ENCODE measurements at regions of chr1 and their contacts with region 1.

Region 1: GRCh38 chr1:202589190-202590030 is 120.8 kb downstream of the SYT2 start:
- DNase-seq: peak; percentile 90 to 95
- ATAC-seq: peak; percentile 95 to 96
- H3K4me3 ChIP-seq: no peak overlapping the region
- H3K27ac ChIP-seq: peak overlapping the region; percentile 77 to 90 (median 82)
- H3K4me1 ChIP-seq: peaks cover 70 to 71% of the 10 kb centered on the region in 2 donors
- H3K27me3 ChIP-seq: no peaks in the 10 kb centered on the region
- CTCF ChIP-seq: no peak
- POLR2A ChIP-seq: no peak

Region 2: DNA sequence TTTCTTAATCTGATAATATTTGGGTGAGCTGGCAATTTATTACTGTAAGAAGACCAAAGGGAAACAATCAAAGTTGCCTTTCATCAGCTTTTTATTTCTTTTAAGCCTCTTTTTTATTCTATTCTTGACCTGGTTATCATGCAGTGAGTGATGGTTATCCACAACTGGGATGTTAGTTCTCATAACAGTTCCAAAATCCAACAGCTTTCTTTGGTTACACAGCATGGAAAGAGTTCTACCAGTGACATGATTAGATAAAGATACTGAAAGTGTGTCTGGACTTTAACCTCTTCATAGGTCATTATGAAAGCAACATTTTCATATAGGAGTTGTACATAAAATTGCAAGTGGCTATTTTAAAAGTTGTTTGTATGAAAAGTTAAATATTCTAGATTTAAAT is 42.2 kb before region 1 on chr1:
- in situ Hi-C with region 1: no loop called
- intact Hi-C with region 1: loop called (anchors 5 kb)
- DNase-seq: no peak
- ATAC-seq: no peak
- H3K4me3 ChIP-seq: no peak overlapping the region
- H3K27ac ChIP-seq: peak overlapping the region; percentile 63 to 83 (median 70)
- H3K4me1 ChIP-seq: peaks cover 66 to 80% of the 10 kb centered on the region in 2 donors
- H3K27me3 ChIP-seq: no peaks in the 10 kb centered on the region
- CTCF ChIP-seq: no peak
- POLR2A ChIP-seq: no peak

Region 3: GRCh38 chr1:202938287-202938925 is 349.0 kb after region 1 on chr1:
- in situ Hi-C with region 1: no loop called
- intact Hi-C with region 1: no loop called
- DNase-seq: no peak
- ATAC-seq: no peak
- H3K4me3 ChIP-seq: no peak overlapping the region
- H3K27ac ChIP-seq: no peak overlapping the region
- H3K4me1 ChIP-seq: no peaks in the 10 kb centered on the region
- H3K27me3 ChIP-seq: no peaks in the 10 kb centered on the region
- CTCF ChIP-seq: no peak
- POLR2A ChIP-seq: no peak

Measured in gastrocnemius medialis (tissue), 4 donors.